Activated naive CD4-positive, alpha-beta T cell treated with anti-CD3 and anti-CD28 coated beads for 36 hours (primary cell): ENCODE measurements at regions of chr3 and their contacts with region 1.

Region 1: DNA sequence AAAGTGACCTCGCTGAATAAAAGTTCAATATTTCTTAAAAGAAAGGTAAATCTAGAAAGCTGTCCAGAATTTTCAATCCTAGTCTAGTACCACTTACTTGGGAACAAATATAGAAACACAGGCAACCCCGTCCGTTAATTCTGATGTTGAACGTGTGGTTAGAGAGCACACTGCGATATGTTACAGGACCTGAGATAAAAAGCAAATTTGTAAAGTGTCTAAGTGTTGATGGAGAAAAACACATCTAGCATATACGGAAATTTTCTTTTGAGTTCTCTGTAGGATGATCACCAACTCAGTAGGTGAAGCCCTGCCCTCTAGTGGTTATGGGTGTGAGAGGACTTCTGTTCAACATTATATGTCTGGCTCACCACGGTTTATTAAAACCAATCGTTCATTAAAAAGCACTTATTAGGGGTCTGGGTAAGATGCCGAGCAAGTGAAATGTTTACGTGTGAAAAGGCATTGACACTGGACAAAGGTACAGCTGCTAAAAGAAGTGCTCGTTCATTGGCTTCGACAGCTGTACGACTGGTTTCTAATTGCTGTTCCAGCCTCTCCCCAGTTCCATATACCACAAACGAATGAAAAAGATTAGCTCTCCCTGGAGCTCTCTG is 1.0 kb upstream of the ATP2C1 start:
- DNase-seq: peak; percentile 83
- H3K4me3 Mint-ChIP-seq: peak overlapping the region; percentile 94
- H3K27ac Mint-ChIP-seq: peak overlapping the region; percentile 98
- H3K4me1 Mint-ChIP-seq: peaks cover 30% of the 10 kb centered on the region
- H3K27me3 Mint-ChIP-seq: no peaks in the 10 kb centered on the region

Region 2: GRCh38 chr3:130111185-130111864 is 781.5 kb before region 1 on chr3:
- CTCF ChIA-PET with region 1: no interaction called
- intact Hi-C with region 1: loop called (anchors 1 kb)
- DNase-seq: peak; percentile 99
- H3K4me3 Mint-ChIP-seq: peak overlapping the region; percentile 92
- H3K27ac Mint-ChIP-seq: peak overlapping the region; percentile 95
- H3K4me1 Mint-ChIP-seq: peaks cover 18% of the 10 kb centered on the region
- H3K27me3 Mint-ChIP-seq: no peaks in the 10 kb centered on the region

Region 3: GRCh38 chr3:130609166-130609979 is 283.5 kb before region 1 on chr3:
- CTCF ChIA-PET with region 1: no interaction called
- intact Hi-C with region 1: no loop called
- DNase-seq: no peak
- H3K4me3 Mint-ChIP-seq: no peak overlapping the region
- H3K27ac Mint-ChIP-seq: no peak overlapping the region
- H3K4me1 Mint-ChIP-seq: no peaks in the 10 kb centered on the region
- H3K27me3 Mint-ChIP-seq: no peaks in the 10 kb centered on the region

Region 4: DNA sequence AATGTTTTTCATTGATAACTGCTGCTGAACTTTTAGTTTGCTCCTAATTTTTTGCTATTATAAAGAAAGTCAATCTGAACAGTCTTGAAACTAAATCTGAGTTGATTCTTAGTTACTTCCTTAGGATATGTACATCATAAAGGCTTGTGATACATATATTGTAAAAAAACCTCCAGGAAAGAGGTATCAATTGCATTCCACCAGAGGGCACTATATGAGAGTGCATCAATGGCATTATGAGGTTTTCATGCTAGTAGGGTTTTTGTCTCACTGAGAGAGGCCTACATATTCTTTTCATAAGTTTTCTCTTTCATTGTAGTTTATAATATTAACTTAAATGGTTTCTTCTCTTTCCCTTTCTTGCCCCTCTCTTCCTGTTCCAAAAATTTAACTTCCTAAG is 193.1 kb before region 1 on chr3:
- CTCF ChIA-PET with region 1: interaction called, 4 read pairs
- intact Hi-C with region 1: loop called (anchors 1 kb)
- DNase-seq: no peak
- H3K4me3 Mint-ChIP-seq: no peak overlapping the region
- H3K27ac Mint-ChIP-seq: no peak overlapping the region
- H3K4me1 Mint-ChIP-seq: no peaks in the 10 kb centered on the region
- H3K27me3 Mint-ChIP-seq: no peaks in the 10 kb centered on the region

Region 5: DNA sequence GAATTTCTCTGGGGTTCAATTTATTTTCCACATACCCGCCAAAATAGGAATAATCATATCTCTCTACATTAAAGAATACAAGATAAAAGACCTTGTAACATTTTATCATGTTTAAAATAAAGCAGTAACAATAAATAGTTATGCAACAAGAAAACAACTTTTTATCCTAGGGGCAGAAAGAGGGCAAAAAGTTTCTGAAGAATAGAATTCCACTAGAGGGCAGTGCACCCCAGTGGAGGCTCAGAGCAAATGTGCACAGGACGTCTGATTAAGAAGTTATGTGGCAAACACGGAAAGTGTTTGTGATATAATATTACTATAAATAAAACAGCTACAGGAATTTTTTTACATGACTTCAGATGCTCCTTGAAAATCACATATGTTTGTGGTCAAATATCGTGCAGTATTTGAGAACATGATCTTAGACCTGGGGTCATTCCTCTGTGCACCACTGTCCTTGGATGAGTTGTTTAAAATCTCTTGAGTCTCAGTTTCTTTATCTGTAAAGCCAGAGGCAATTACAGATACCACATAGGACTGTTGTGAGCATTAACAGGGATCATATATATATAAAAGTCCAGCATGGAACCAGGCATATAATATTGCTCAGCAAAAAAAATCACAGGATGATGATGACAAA is 133.0 kb before region 1 on chr3:
- CTCF ChIA-PET with region 1: interaction called, 63 read pairs
- intact Hi-C with region 1: loop called (anchors 1 kb)
- DNase-seq: peak; percentile 77
- H3K4me3 Mint-ChIP-seq: no peak overlapping the region
- H3K27ac Mint-ChIP-seq: no peak overlapping the region
- H3K4me1 Mint-ChIP-seq: no peaks in the 10 kb centered on the region
- H3K27me3 Mint-ChIP-seq: peaks cover 14% of the 10 kb centered on the region

Region 6: DNA sequence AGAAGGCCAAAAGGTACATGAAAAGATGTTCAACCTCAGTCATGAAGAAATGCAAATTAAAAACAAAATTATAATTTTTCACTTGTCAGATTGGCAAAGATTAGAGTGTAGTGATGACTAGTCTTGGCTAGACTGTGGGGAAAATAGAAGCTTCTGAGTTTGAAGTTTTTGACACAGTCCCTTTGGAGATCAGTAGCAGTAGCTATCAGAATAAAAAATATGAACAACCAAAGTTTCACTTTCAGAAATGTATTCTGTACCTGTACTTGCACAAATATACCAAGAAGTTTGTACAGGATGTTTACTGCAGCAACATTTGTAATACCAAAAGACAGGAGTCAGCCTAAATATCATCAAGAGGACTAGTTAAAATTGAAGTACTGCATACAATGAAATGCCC is 15.1 kb after region 1 on chr3:
- CTCF ChIA-PET with region 1: interaction called, 3 read pairs
- intact Hi-C with region 1: loop called (anchors 1 kb)
- DNase-seq: no peak
- H3K4me3 Mint-ChIP-seq: no peak overlapping the region
- H3K27ac Mint-ChIP-seq: no peak overlapping the region
- H3K4me1 Mint-ChIP-seq: peaks cover 44% of the 10 kb centered on the region
- H3K27me3 Mint-ChIP-seq: no peaks in the 10 kb centered on the region

Region 7: DNA sequence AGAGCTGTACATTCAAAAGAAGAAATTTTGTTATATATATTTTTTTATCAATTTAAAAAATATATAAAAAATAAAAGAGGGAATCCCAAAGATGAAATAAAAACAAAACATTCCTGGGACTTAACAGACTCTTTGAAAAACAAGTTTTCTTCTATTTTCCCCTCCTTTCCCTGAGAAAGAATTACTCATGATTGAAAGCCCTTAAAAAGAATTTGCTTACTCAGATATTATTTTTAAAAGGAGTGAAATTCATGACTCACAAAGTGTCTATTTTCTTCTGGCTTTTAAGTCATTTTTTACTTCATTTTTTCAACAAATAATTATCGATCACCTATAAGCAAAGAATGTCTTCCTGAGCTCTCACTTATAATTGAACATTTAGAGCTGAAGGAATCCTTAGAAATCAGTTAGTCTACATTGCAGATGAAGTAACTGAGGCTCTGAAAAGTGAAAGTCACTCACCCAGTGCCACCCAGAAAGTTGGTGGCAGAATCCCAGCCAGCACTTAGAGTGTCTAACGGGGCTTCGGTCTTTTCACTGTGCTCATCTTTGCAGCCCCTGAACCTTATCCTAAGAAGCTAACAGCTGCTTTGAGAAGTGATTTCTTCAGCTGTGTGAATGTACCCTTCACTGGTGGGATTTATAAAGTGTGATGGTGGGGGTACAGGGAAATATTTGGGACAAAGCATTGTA is 446.2 kb after region 1 on chr3:
- CTCF ChIA-PET with region 1: no interaction called
- intact Hi-C with region 1: no loop called
- DNase-seq: no peak
- H3K4me3 Mint-ChIP-seq: no peak overlapping the region
- H3K27ac Mint-ChIP-seq: no peak overlapping the region
- H3K4me1 Mint-ChIP-seq: no peaks in the 10 kb centered on the region
- H3K27me3 Mint-ChIP-seq: no peaks in the 10 kb centered on the region

Region 8: DNA sequence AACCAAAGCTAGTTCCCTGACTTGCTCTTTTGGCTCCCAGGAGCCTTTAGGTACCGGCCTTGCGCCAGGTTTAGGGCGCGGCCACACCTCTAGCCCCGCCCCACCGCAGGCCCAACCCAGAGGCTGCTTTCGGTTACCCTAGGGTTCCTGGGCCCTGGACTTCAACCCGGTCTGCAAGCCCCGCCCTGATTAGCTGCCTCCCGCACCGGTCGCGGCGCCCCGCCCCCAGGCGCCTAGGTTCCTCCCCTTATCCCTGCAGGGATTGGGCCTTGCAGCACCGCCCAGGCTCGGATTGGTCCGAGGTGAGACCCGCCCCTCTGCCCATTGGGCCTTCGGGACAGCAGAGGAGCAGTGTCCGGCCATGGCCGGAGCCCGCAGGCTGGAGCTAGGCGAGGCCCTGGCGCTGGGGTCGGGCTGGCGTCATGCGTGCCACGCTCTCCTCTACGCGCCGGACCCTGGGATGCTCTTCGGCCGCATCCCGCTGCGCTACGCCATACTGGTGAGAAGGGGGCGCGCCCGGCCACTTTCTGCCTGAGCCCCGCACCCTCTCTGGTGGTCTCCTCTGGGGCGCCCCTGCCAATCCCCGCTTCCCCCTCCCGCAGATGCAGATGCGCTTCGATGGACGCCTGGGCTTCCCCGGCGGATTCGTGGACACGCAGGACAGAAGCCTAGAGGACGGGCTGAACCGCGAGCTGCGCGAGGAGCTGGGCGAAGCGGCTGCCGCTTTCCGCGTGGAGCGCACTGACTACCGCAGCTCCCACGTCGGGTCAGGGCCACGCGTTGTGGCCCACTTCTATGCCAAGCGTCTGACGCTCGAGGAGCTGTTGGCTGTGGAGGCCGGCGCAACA is 488.8 kb after region 1 on chr3 and contains the start of gene NUDT16:
- CTCF ChIA-PET with region 1: no interaction called
- intact Hi-C with region 1: loop called (anchors 1 kb)
- DNase-seq: peak; percentile 97
- H3K4me3 Mint-ChIP-seq: peak within 1 kb of the TSS; percentile 94
- H3K27ac Mint-ChIP-seq: peak within 1 kb of the TSS; percentile 81
- H3K4me1 Mint-ChIP-seq: peaks cover 21% of the 10 kb centered on the region
- H3K27me3 Mint-ChIP-seq: no peaks in the 10 kb centered on the region
- total RNA-seq, gene NUDT16: 4.9 to 5.9 TPM